MCF 10A (cell line): ENCODE measurements at regions of chr19 and their contacts with region 1.

Region 1: GRCh38 chr19:11685676-11686650 is 52.8 kb downstream of the ZNF823 start:
- DNase-seq: no peak
- H3K4me3 Mint-ChIP-seq: no peak overlapping the region
- H3K27ac Mint-ChIP-seq: no peak overlapping the region
- H3K4me1 Mint-ChIP-seq: no peaks in the 10 kb centered on the region
- H3K27me3 Mint-ChIP-seq: no peaks in the 10 kb centered on the region
- CTCF ChIP-seq: no peak

Region 2: GRCh38 chr19:11659612-11660011 is 26.4 kb before region 1 on chr19:
- CTCF ChIA-PET with region 1: no interaction called
- POLR2A ChIA-PET with region 1: no interaction called
- intact Hi-C with region 1: no loop called
- DNase-seq: no peak
- H3K4me3 Mint-ChIP-seq: no peak overlapping the region
- H3K27ac Mint-ChIP-seq: no peak overlapping the region
- H3K4me1 Mint-ChIP-seq: no peaks in the 10 kb centered on the region
- H3K27me3 Mint-ChIP-seq: no peaks in the 10 kb centered on the region
- CTCF ChIP-seq: peak; percentile 31

Region 3: GRCh38 chr19:11699931-11700794 is 14.2 kb after region 1 on chr19:
- CTCF ChIA-PET with region 1: interaction called, 20 read pairs
- POLR2A ChIA-PET with region 1: interaction called, 3 read pairs
- intact Hi-C with region 1: no loop called
- DNase-seq: peak; percentile 45
- H3K4me3 Mint-ChIP-seq: no peak overlapping the region
- H3K27ac Mint-ChIP-seq: no peak overlapping the region
- H3K4me1 Mint-ChIP-seq: no peaks in the 10 kb centered on the region
- H3K27me3 Mint-ChIP-seq: no peaks in the 10 kb centered on the region
- CTCF ChIP-seq: peak; percentile 62

Region 4: DNA sequence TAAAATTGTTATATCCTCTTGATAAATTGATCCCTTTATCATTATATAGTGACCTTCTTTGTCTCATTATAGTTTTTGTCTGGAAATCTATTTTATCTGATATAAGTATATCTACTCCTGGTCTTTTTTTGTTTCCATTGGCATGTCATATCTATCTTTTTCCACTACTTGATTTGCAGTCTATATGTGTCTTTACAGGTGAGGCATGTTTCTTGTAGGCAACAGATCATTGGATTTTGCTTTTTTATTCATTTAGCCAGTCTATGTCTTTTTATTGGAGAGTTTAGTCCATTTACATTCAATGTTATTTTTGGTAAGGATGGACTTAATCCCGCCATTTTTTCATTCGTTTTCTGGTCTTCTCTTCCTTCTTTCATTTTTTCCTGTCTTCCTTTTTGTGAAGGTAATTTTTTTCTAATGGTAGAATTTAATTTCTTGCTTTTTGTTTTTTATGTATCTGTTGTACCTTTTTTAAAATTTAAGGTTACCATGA is 66.3 kb after region 1 on chr19:
- CTCF ChIA-PET with region 1: no interaction called
- POLR2A ChIA-PET with region 1: no interaction called
- intact Hi-C with region 1: no loop called
- DNase-seq: no peak
- H3K4me3 Mint-ChIP-seq: no peak overlapping the region
- H3K27ac Mint-ChIP-seq: no peak overlapping the region
- H3K4me1 Mint-ChIP-seq: no peaks in the 10 kb centered on the region
- H3K27me3 Mint-ChIP-seq: no peaks in the 10 kb centered on the region
- CTCF ChIP-seq: no peak

Region 5: GRCh38 chr19:11781295-11782052 is 95.5 kb after region 1 on chr19:
- CTCF ChIA-PET with region 1: no interaction called
- POLR2A ChIA-PET with region 1: no interaction called
- intact Hi-C with region 1: no loop called
- DNase-seq: no peak
- H3K4me3 Mint-ChIP-seq: no peak overlapping the region
- H3K27ac Mint-ChIP-seq: no peak overlapping the region
- H3K4me1 Mint-ChIP-seq: no peaks in the 10 kb centered on the region
- H3K27me3 Mint-ChIP-seq: no peaks in the 10 kb centered on the region
- CTCF ChIP-seq: no peak